BJ (cell line): ENCODE measurements at regions of chr10 and their contacts with region 1.

Region 1: DNA sequence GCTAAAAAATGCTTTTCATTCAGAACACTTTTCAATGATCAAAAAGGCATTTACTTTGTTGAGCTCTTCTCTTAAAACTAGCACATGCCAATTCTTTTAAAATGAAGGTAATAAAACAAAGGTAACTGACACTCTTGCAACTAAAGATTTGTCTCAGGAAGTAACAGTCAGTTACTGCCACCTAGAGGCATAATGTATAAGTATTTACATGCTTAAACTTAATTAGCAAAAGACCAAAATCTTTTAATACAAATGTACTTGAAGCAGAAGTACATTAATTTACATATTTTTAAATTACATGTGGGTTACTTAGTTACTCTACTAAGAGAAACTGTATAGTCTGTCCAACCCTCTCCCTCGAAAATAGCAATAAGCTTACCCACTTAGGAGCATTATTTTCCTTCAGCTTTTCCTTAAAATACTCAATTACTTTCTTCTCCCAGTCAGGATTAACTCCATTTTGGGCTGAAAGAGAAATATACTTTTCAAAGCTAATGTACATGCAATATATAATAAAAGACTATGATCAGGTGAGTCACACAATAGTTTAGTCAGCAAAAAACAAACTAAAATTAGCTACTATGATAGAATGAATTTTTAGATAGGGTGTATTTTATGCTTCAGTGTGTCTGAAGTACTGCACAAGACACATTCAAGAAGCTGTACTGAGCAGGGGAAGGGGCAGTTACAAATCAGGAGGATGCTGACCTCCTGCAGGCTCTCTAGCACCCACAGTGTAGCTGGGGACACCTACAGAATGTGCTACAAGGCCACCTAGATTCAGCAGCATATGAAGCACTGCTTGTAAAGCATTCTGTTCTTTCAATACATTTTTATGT is 13.0 kb downstream of the MCMBP start:
- DNase-seq: no peak
- H3K4me3 ChIP-seq: no peak overlapping the region
- H3K27me3 ChIP-seq: no peaks in the 10 kb centered on the region
- CTCF ChIP-seq: peak; percentile 47

Region 2: GRCh38 chr10:119616882-119617570 is 242.6 kb before region 1 on chr10:
- CTCF ChIA-PET with region 1: interaction called, 12 read pairs
- POLR2A ChIA-PET with region 1: no interaction called
- DNase-seq: no peak
- H3K4me3 ChIP-seq: no peak overlapping the region
- H3K27me3 ChIP-seq: no peaks in the 10 kb centered on the region
- CTCF ChIP-seq: peak; percentile 67

Region 3: GRCh38 chr10:119686439-119687191 is 173.0 kb before region 1 on chr10:
- CTCF ChIA-PET with region 1: interaction called, 16 read pairs
- POLR2A ChIA-PET with region 1: no interaction called
- DNase-seq: peak; percentile 65
- H3K4me3 ChIP-seq: peak overlapping the region; percentile 32
- H3K27me3 ChIP-seq: no peaks in the 10 kb centered on the region; the same call in 1 of the 2 replicates
- CTCF ChIP-seq: peak; percentile 90

Region 4: GRCh38 chr10:119761106-119761505 is 98.5 kb before region 1 on chr10:
- CTCF ChIA-PET with region 1: interaction called, 13 read pairs
- POLR2A ChIA-PET with region 1: no interaction called
- DNase-seq: peak; percentile 88
- H3K4me3 ChIP-seq: no peak overlapping the region
- H3K27me3 ChIP-seq: no peaks in the 10 kb centered on the region
- CTCF ChIP-seq: no peak